GM10248 (cell line): ENCODE measurements at regions of chr12 and their contacts with region 1.

Region 1: GRCh38 chr12:130747867-130748740 is 32.0 kb upstream of the RIMBP2 start:
- DNase-seq: peak; percentile 72
- CTCF ChIP-seq: peak; percentile 89

Region 2: GRCh38 chr12:130715998-130716968 is 31.8 kb before region 1 on chr12 and contains the start of gene RIMBP2:
- CTCF ChIA-PET with region 1: interaction called, 12 read pairs
- POLR2A ChIA-PET with region 1: no interaction called
- DNase-seq: no peak
- CTCF ChIP-seq: no peak

Region 3: DNA sequence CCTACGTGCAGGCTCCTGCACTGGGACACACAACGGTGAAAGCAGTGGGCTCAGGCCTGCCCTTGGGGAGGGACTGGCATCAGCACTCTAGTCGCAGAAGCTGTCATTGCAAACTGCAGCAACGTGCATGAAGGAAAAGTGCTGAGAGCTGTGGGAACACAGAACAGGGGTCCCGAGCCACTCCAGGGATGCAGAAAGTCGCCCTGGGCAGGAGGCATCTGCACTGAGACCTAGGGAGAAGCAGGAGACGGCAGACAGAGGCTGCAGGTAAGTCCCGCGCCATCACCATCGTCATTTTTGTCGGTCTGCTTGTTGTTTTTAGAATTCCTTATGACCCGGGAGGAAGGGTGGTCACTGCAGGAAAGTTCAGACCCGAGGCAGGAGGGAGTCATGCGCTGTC is 10.4 kb before region 1 on chr12:
- CTCF ChIA-PET with region 1: interaction called, 12 read pairs
- POLR2A ChIA-PET with region 1: no interaction called
- DNase-seq: no peak
- CTCF ChIP-seq: no peak